ENCODE measurements at regions of chr14 and their contacts with region 1.

Region 1: DNA sequence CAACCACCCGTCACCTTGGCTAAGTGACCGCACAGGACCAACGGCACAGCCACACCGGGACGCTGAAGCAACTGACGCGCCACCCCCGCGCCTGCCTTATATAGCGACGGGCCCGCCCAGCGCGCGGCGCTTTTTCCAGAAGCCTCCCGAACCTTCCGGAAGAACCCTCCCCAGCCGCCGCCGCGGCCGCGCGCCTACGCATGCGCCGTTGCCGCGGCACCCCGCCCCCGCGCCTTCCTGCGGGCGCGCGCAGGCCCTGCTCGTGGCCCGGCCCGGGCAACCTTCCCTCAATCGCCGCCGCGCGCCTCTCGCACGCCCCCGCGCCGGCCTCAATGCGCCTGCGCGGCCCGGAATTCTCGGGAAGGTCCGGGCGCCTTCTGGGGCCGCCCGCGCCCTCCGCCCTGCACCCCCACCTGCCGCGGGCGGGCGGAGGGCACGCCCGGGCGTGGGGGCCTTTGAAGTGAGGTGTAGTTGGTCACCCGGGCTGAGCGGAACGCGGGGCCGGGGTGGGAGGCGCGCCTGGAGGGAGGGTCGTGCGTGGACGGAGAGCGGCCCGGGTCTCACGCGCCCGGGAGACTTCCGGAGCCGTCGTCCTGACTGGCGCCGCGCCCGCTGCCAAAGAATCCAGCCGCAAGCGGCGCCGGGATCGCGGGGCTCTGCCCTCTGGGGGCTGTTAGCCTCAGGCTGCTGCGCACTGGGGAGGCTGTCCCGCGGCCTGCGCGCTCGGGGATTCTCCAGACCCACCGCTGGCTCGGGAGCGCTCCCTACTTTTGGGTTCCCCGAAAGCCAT is at the start of gene HSP90AA1:
- DNase-seq: peak; percentile 96
- ATAC-seq: peak; percentile 78
- H3K4me3 ChIP-seq: peak within 1 kb of the TSS; percentile 86
- H3K27ac ChIP-seq: peak within 1 kb of the TSS; percentile 79
- H3K4me1 ChIP-seq: peaks cover 28% of the 10 kb centered on the region
- H3K27me3 ChIP-seq: no peaks in the 10 kb centered on the region
- CTCF ChIP-seq: 0 out of 2 replicates have a peak, but pooled peaks have one; percentile 16
- total RNA-seq, gene HSP90AA1: 671 and 785 TPM in 2 replicates

Region 2: DNA sequence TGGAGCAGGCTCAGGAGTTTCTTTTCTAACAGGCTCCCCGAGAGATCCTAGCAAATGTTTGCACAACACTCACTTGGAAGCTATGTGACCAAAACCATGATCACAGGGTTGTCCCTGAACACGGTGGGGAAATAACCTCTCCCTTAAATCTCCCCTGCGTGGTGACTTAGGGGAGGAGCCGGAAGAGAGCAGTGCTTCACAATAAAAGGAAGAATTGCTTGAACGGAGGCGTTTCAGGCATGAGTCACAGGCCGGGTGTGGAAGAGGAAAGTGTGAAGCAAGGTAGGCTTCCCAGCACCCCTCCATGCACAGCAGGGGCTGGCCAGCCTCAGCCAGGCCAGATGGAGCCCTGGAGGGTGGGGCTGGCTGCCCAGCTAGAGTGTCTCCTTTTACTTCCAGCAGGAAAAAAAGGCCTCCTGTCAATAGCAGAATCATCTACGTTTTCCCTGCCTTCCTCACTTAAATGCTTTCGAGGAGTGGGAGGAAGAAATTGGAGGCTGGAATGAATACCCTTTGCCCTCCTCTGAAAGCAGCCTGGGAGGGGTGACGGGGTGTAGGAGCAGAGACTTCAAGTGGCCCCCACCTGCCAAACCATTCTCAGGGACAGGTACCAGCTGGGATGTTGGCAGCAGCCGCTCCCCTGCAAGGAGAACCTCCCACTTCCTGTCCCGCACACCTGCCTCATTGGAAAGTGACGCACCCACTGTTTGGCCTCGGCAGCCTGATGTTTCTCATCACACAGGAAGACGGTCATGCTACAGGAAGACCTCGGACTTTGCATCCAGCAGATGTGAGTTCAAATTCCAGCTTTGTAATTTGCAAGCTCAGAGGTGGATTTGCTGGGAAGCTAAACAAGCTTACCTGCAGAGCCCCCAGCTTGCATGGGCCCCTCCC is 355.7 kb before region 1 on chr14:
- CTCF ChIA-PET with region 1: no interaction called
- POLR2A ChIA-PET with region 1: interaction called, 21 read pairs
- intact Hi-C with region 1: no loop called
- DNase-seq: peak; percentile 98
- ATAC-seq: peak; percentile 90
- H3K4me3 ChIP-seq: peak overlapping the region; percentile 52
- H3K27ac ChIP-seq: peak overlapping the region; percentile 99
- H3K4me1 ChIP-seq: peaks cover 44% of the 10 kb centered on the region
- H3K27me3 ChIP-seq: no peaks in the 10 kb centered on the region
- CTCF ChIP-seq: no peak

Region 3: GRCh38 chr14:102063091-102063802 is 23.9 kb before region 1 on chr14:
- CTCF ChIA-PET with region 1: interaction called, 3 read pairs
- POLR2A ChIA-PET with region 1: interaction called, 10 read pairs
- intact Hi-C with region 1: loop called (anchors 1 kb)
- DNase-seq: peak; percentile 96
- ATAC-seq: peak; percentile 94
- H3K4me3 ChIP-seq: peak overlapping the region; percentile 43
- H3K27ac ChIP-seq: peak overlapping the region; percentile 31
- H3K4me1 ChIP-seq: peaks cover 8% of the 10 kb centered on the region
- H3K27me3 ChIP-seq: no peaks in the 10 kb centered on the region
- CTCF ChIP-seq: peak; percentile 69

Region 4: DNA sequence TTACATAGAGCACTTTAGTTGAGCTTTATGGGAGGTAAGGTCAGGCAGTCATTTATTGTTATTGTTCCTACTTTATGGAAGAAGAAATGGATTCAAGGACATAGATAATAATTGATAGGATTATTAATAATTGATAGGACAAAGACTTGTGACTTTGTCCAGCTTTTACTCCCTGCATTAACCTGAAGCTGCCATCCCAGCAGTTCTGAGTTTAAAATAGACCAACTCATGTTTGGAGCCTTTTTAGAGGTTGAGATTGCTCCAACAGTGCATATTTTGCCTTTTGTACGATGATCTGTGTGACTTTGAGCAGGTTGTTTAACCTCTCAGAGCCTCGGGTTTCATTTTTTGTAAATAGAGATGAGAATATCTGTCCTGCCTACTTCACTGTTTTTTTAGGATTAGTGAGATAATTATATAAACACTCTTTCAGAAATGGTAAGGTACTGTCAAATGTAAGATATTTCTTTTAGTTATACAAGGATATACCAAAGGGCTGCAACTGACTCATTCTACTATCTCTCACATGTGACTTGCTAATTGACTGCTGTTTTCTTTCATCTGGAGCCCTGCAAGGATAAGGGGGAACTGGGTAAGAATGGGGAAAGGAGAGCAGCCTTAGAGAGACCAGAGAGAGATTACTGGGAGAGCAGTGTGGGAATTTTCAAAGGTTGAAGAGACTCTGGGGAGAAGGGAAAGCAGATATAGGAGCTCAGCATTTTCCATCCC is 67.8 kb after region 1 on chr14:
- CTCF ChIA-PET with region 1: no interaction called
- POLR2A ChIA-PET with region 1: no interaction called
- intact Hi-C with region 1: no loop called
- DNase-seq: no peak
- ATAC-seq: no peak
- H3K4me3 ChIP-seq: no peak overlapping the region
- H3K27ac ChIP-seq: no peak overlapping the region
- H3K4me1 ChIP-seq: no peaks in the 10 kb centered on the region
- H3K27me3 ChIP-seq: no peaks in the 10 kb centered on the region
- CTCF ChIP-seq: no peak

Region 5: GRCh38 chr14:102295270-102295669 is 208.1 kb after region 1 on chr14:
- CTCF ChIA-PET with region 1: no interaction called
- POLR2A ChIA-PET with region 1: no interaction called
- intact Hi-C with region 1: no loop called
- DNase-seq: peak; percentile 53
- ATAC-seq: peak; percentile 49
- H3K4me3 ChIP-seq: no peak overlapping the region
- H3K27ac ChIP-seq: peak overlapping the region; percentile 97
- H3K4me1 ChIP-seq: peaks cover 47% of the 10 kb centered on the region
- H3K27me3 ChIP-seq: no peaks in the 10 kb centered on the region
- CTCF ChIP-seq: peak; percentile 63

Region 6: DNA sequence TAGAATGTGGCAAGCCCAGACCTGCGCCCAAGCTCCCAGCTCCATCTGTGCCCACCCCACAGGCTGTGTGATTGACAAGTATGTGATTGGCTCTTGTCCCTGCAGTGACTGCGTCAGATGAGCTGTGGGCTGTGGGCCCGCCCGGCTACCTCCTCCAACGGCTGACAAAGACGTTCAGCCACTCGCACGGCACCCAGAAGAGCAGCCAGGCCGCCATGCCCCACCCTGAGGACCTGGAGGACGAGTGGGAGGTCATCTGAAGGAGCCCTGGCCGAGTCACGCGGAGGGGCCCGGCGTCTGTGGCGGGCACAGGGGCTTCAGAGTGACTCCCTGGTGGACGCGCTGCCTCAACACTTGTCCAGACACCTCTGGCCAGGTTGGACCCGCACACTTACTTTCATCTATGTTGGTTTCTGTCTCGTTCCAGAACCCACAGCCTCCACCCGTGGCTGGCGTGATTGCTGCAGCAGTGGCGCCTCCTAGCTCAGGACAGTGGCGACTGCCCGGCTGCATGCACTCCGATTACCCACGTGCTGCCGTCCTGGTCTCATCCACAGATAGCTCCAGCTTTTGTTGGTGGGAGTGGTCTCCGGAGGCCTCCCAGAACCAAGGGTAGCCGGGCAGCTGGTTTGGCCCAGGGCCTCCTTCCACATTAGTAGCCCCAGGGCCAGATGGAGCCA is 411.0 kb after region 1 on chr14:
- CTCF ChIA-PET with region 1: interaction called, 11 read pairs
- POLR2A ChIA-PET with region 1: no interaction called
- intact Hi-C with region 1: no loop called
- DNase-seq: peak; percentile 41
- ATAC-seq: peak; percentile 48; the same call in 1 of the 2 replicates
- H3K4me3 ChIP-seq: no peak overlapping the region
- H3K27ac ChIP-seq: no peak overlapping the region
- H3K4me1 ChIP-seq: no peaks in the 10 kb centered on the region
- H3K27me3 ChIP-seq: no peaks in the 10 kb centered on the region
- CTCF ChIP-seq: peak; percentile 61

Region 7: GRCh38 chr14:103045371-103045869 is 958.3 kb after region 1 on chr14:
- CTCF ChIA-PET with region 1: no interaction called
- POLR2A ChIA-PET with region 1: no interaction called
- intact Hi-C with region 1: no loop called
- DNase-seq: no peak
- ATAC-seq: no peak
- H3K4me3 ChIP-seq: no peak overlapping the region
- H3K27ac ChIP-seq: no peak overlapping the region
- H3K4me1 ChIP-seq: no peaks in the 10 kb centered on the region
- H3K27me3 ChIP-seq: no peaks in the 10 kb centered on the region
- CTCF ChIP-seq: no peak

Measured in PC-3 (cell line).